A673 (cell line): ENCODE measurements at regions of chr4 and their contacts with region 1.

Region 1: GRCh38 chr4:173257732-173258717 is 76.1 kb downstream of the HMGB2 start:
- DNase-seq: peak; percentile 86
- H3K4me3 ChIP-seq: no peak overlapping the region
- H3K27ac ChIP-seq: peak overlapping the region; percentile 37
- H3K4me1 ChIP-seq: peaks cover 62% of the 10 kb centered on the region
- H3K27me3 ChIP-seq: no peaks in the 10 kb centered on the region
- CTCF ChIP-seq: peak; percentile 94

Region 2: DNA sequence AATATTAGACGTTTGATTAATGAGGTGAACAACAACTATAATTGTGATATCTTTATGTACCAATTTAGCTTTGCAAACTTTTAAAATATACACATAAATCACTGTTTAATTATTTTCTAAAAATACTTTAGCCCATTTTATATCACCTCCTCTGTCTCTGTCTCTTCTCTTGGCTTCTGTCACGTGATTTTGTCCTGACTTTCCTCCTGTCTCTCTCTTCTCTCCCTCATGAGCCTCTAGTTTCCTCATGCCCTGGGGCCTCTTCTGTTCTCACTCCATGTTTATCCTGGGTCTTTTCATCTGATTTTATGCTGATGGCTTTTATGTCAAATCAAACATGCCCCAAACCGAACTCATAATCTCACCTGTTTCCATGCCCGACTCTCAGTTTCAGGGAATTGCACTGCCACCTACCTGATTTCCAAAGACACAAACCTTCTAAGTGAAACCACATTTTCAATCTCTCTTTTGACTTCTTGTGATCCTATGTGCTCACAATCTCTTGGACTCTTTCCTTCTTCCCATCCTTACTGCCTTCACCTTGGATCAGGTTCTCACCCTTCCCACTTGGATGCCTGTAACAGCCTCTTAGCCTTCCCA is 392.4 kb before region 1 on chr4:
- CTCF ChIA-PET with region 1: no interaction called
- POLR2A ChIA-PET with region 1: no interaction called
- intact Hi-C with region 1: loop called (anchors 10 kb)
- DNase-seq: no peak
- H3K4me3 ChIP-seq: no peak overlapping the region
- H3K27ac ChIP-seq: no peak overlapping the region
- H3K4me1 ChIP-seq: no peaks in the 10 kb centered on the region
- H3K27me3 ChIP-seq: no peaks in the 10 kb centered on the region
- CTCF ChIP-seq: no peak

Region 3: GRCh38 chr4:172892300-172892699 is 365.7 kb before region 1 on chr4:
- CTCF ChIA-PET with region 1: no interaction called
- POLR2A ChIA-PET with region 1: no interaction called
- intact Hi-C with region 1: loop called (anchors 10 kb)
- DNase-seq: peak; percentile 45
- H3K4me3 ChIP-seq: no peak overlapping the region
- H3K27ac ChIP-seq: no peak overlapping the region
- H3K4me1 ChIP-seq: no peaks in the 10 kb centered on the region
- H3K27me3 ChIP-seq: no peaks in the 10 kb centered on the region
- CTCF ChIP-seq: peak; percentile 68

Region 4: DNA sequence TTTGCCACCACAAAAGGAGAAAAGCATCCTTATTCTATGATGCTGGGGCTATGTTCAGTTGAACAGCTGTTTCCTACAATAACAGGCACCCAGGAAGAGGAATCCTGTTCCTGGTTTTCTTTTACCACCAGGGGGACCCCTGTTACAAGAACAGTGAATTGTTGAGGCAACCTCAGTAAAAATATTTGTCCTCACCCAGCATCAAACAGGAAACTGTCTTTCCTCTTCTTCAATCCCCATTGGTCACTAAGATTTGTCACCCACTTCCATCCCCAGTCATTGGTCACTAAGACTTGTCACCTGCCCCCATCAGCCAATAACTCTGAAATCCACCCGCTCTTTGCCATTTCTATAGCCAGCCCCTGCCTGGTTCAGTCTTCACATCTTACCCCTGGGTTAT is 232.9 kb before region 1 on chr4:
- CTCF ChIA-PET with region 1: interaction called, 25 read pairs
- POLR2A ChIA-PET with region 1: no interaction called
- intact Hi-C with region 1: loop called (anchors 1 kb)
- DNase-seq: peak; percentile 93
- H3K4me3 ChIP-seq: no peak overlapping the region
- H3K27ac ChIP-seq: no peak overlapping the region
- H3K4me1 ChIP-seq: peaks cover 52% of the 10 kb centered on the region
- H3K27me3 ChIP-seq: no peaks in the 10 kb centered on the region
- CTCF ChIP-seq: peak; percentile 83

Region 5: GRCh38 chr4:173169428-173170181 is 88.4 kb before region 1 on chr4:
- CTCF ChIA-PET with region 1: interaction called, 3 read pairs
- POLR2A ChIA-PET with region 1: interaction called, 8 read pairs
- intact Hi-C with region 1: loop called (anchors 2 kb)
- DNase-seq: peak; percentile 83
- H3K4me3 ChIP-seq: peak overlapping the region; percentile 74
- H3K27ac ChIP-seq: peak overlapping the region; percentile 90
- H3K4me1 ChIP-seq: peaks cover 42% of the 10 kb centered on the region
- H3K27me3 ChIP-seq: no peaks in the 10 kb centered on the region
- CTCF ChIP-seq: no peak

Region 6: DNA sequence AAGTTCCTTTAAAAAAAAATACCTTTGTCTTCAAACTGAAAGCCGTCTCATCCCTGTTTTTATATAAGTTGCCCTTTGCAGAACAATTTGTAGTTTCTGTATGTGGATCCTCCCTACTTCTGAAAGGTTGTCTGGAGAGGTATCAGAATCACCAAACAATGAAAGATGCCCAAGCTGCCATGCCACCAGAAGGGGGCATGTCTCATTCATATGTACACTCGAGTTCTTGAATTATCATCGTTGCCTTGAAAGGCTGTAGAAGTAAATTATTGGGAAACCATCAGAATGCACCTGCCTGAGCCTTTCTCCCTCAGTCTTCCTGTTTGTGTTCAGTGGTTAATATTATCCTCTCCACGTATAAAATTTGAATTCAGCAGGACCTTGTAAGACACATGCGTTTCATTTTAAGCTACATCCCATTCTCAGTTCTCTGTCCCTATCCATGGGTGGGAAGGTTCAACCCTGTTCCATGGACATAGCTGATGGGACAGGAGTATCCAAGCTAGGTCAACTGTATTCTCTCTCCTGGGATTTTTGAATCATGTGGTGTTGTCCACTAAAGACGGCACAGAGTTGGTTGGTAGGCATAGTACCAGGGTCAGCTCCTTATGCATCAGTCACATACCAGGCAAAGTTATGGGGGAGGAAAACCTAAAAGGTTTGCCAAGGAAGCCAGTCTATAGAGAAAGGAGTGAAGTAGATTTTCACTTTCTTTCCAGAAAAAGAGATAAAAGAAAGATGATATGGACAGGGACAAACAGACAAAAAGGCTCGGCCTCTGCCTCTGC is 65.5 kb before region 1 on chr4:
- CTCF ChIA-PET with region 1: no interaction called
- POLR2A ChIA-PET with region 1: no interaction called
- intact Hi-C with region 1: loop called (anchors 2 kb)
- DNase-seq: peak; percentile 56
- H3K4me3 ChIP-seq: no peak overlapping the region
- H3K27ac ChIP-seq: no peak overlapping the region
- H3K4me1 ChIP-seq: peaks cover 41% of the 10 kb centered on the region
- H3K27me3 ChIP-seq: no peaks in the 10 kb centered on the region
- CTCF ChIP-seq: peak; percentile 67

Region 7: GRCh38 chr4:173243917-173244658 is 13.9 kb before region 1 on chr4:
- CTCF ChIA-PET with region 1: no interaction called
- POLR2A ChIA-PET with region 1: no interaction called
- intact Hi-C with region 1: no loop called
- DNase-seq: no peak
- H3K4me3 ChIP-seq: no peak overlapping the region
- H3K27ac ChIP-seq: no peak overlapping the region
- H3K4me1 ChIP-seq: peaks cover 67% of the 10 kb centered on the region
- H3K27me3 ChIP-seq: no peaks in the 10 kb centered on the region
- CTCF ChIP-seq: no peak

Region 8: GRCh38 chr4:173301518-173302201 is 43.6 kb after region 1 on chr4:
- CTCF ChIA-PET with region 1: interaction called, 4 read pairs
- POLR2A ChIA-PET with region 1: no interaction called
- intact Hi-C with region 1: loop called (anchors 2 kb)
- DNase-seq: peak; percentile 69
- H3K4me3 ChIP-seq: no peak overlapping the region
- H3K27ac ChIP-seq: peak overlapping the region; percentile 34
- H3K4me1 ChIP-seq: peaks cover 15% of the 10 kb centered on the region
- H3K27me3 ChIP-seq: no peaks in the 10 kb centered on the region
- CTCF ChIP-seq: peak; percentile 92

Region 9: GRCh38 chr4:173318648-173319211 is 60.7 kb after region 1 on chr4:
- CTCF ChIA-PET with region 1: no interaction called
- POLR2A ChIA-PET with region 1: no interaction called
- intact Hi-C with region 1: no loop called
- DNase-seq: peak; percentile 71
- H3K4me3 ChIP-seq: no peak overlapping the region
- H3K27ac ChIP-seq: no peak overlapping the region
- H3K4me1 ChIP-seq: peaks cover 20% of the 10 kb centered on the region
- H3K27me3 ChIP-seq: no peaks in the 10 kb centered on the region
- CTCF ChIP-seq: peak; percentile 54; the same call in 1 of the 2 replicates